ENCODE measurements at regions of chr13 and their contacts with region 1.

Region 1: DNA sequence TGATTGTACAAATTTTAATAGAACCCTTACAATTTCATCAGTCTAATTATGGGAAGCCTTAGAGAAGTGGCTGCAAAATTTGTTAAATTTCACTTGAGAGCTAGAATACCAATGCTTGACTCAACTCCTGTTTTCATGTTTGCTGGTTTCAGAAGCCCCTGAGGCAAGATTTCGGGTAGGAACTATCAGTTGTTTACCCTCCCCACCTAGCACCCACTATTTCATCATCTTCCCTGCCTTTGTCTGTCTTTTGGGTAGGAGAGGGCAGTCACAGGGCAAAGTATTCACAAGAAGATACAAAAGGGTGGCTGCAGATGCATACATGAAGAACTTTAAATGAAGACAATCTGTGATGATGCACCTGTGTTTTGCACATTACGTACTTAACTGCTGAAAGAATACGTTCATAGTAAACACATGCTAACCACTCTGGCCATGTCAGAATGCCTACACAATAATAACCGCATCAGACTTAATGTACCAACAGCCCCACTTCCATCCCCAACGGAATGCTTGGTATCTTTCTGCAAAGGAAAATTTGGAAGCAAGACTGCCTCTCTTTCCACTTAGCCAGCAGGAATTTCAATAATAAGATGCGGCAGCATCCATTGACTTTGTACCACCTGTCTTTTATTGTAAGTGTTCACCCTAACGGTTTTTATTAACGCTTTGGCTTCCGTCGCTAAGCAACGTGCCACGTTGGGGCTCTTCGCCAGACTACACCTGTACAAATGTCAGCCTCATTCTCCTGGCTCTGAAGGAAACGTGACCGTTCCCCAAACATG is 30.4 kb downstream of the TPT1 start:
- DNase-seq: no peak
- ATAC-seq: peak; percentile 48; the same call in 2 of the 3 replicates
- H3K4me3 ChIP-seq: peak overlapping the region; percentile 32; the same call in 1 of the 2 replicates
- H3K27ac ChIP-seq: no peak overlapping the region
- H3K4me1 ChIP-seq: peaks cover 3% of the 10 kb centered on the region
- H3K27me3 ChIP-seq: no peaks in the 10 kb centered on the region; a peak in 1 of 4 replicates
- CTCF ChIP-seq: no peak
- EP300 ChIP-seq: no peak
- POLR2A ChIP-seq: no peak
- RAD21 ChIP-seq: no peak

Region 2: DNA sequence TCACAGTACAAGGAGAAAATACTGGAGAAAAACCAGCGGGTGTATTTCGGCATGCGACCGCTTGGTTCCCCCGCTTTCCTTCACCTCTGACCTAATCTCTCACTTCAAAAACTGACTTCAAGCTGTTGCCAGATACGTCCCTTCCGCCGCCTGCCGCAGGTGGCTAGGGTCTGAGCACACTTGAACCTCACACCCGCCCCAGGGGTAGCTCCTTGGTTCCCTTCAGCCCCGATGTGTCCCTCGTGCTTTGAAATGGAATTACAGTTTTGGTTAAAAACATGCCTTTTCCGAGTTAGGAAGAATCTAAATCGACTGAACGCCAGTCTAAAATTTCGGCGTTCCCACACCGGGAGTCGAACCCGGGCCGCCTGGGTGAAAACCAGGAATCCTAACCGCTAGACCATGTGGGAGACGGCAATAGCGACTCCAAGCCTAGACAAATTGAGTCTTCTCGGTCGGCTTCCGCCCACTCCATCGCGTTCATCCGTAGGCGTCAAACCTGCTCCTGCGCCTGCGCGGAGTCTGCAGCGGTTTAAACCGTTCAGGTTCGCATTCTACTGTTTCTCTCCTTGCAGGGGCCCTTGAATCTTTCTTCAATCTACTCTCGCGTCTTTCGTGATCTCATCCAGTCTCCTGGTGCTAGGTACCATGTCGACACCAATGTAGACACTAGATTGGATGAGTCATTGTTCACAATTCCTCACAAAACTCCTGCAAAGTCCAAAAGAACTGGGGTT is 392.8 kb before region 1 on chr13:
- CTCF ChIA-PET with region 1: interaction called, 4 read pairs
- POLR2A ChIA-PET with region 1: interaction called, 6 read pairs
- RAD21 ChIA-PET with region 1: no interaction called
- SMC1A ChIA-PET with region 1: no interaction called
- in situ Hi-C with region 1: no loop called
- intact Hi-C with region 1: loop called (anchors 10 kb)
- DNase-seq: peak; percentile 98
- ATAC-seq: peak; percentile 90
- H3K4me3 ChIP-seq: peak overlapping the region; percentile 84
- H3K27ac ChIP-seq: peak overlapping the region; percentile 80
- H3K4me1 ChIP-seq: peaks cover 3% of the 10 kb centered on the region; the same call in 1 of the 2 replicates
- H3K27me3 ChIP-seq: no peaks in the 10 kb centered on the region
- CTCF ChIP-seq: peak in 2 of 3 experiments; percentile 11 to 40; a peak in 5 of 6 replicates
- EP300 ChIP-seq: peak in 1 of 2 experiments; percentile 79; a peak in 2 of 4 replicates
- POLR2A ChIP-seq: peak; percentile 64; the same call in 1 of the 2 replicates
- RAD21 ChIP-seq: peak; percentile 26; the same call in 1 of the 2 replicates

Region 3: GRCh38 chr13:44969551-44970484 is 340.7 kb before region 1 on chr13:
- CTCF ChIA-PET with region 1: interaction called, 11 read pairs
- POLR2A ChIA-PET with region 1: no interaction called
- RAD21 ChIA-PET with region 1: no interaction called
- SMC1A ChIA-PET with region 1: interaction called, 4 read pairs
- in situ Hi-C with region 1: no loop called
- intact Hi-C with region 1: no loop called
- DNase-seq: no peak
- ATAC-seq: peak; percentile 16; the same call in 1 of the 3 replicates
- H3K4me3 ChIP-seq: no peak overlapping the region
- H3K27ac ChIP-seq: no peak overlapping the region
- H3K4me1 ChIP-seq: peaks cover 5% of the 10 kb centered on the region
- H3K27me3 ChIP-seq: no peaks in the 10 kb centered on the region
- CTCF ChIP-seq: peak; percentile 48 to 70 (median 67); a peak in 5 of 6 replicates
- EP300 ChIP-seq: no peak
- POLR2A ChIP-seq: no peak
- RAD21 ChIP-seq: peak; percentile 75

Region 4: DNA sequence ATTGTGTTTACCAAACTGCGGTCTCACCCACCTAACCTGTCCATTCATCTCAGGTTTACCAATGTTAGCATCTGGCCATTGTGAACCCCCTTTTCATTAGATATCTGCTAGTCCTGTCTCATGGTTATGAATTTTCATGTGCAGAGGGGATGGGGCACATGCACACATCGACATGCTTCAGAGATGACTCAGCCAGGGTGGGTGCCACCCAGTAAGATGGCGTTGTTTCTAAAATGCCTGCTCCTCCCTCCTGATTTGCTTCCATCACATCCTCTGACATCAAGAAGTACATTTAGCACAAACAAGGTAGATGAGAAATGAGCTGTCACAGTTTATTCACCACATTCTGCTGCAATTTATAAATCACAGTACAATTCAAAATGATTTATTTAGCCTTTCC is 269.9 kb before region 1 on chr13:
- CTCF ChIA-PET with region 1: interaction called, 108 read pairs
- POLR2A ChIA-PET with region 1: no interaction called
- RAD21 ChIA-PET with region 1: interaction called, 43 read pairs
- SMC1A ChIA-PET with region 1: interaction called, 75 read pairs
- in situ Hi-C with region 1: loop called (anchors 5 kb)
- intact Hi-C with region 1: no loop called
- DNase-seq: no peak
- ATAC-seq: no peak
- H3K4me3 ChIP-seq: no peak overlapping the region
- H3K27ac ChIP-seq: no peak overlapping the region
- H3K4me1 ChIP-seq: no peaks in the 10 kb centered on the region
- H3K27me3 ChIP-seq: no peaks in the 10 kb centered on the region
- CTCF ChIP-seq: no peak
- EP300 ChIP-seq: no peak
- POLR2A ChIP-seq: no peak
- RAD21 ChIP-seq: no peak

Region 5: GRCh38 chr13:45349438-45349837 is 38.9 kb after region 1 on chr13:
- CTCF ChIA-PET with region 1: no interaction called
- POLR2A ChIA-PET with region 1: no interaction called
- RAD21 ChIA-PET with region 1: no interaction called
- SMC1A ChIA-PET with region 1: no interaction called
- in situ Hi-C with region 1: no loop called
- intact Hi-C with region 1: no loop called
- DNase-seq: no peak
- ATAC-seq: no peak
- H3K4me3 ChIP-seq: no peak overlapping the region
- H3K27ac ChIP-seq: no peak overlapping the region
- H3K4me1 ChIP-seq: peaks cover 8% of the 10 kb centered on the region
- H3K27me3 ChIP-seq: no peaks in the 10 kb centered on the region
- CTCF ChIP-seq: no peak
- EP300 ChIP-seq: no peak
- POLR2A ChIP-seq: no peak
- RAD21 ChIP-seq: no peak